ENCODE measurements at regions of chr15 and their contacts with region 1.

Region 1: DNA sequence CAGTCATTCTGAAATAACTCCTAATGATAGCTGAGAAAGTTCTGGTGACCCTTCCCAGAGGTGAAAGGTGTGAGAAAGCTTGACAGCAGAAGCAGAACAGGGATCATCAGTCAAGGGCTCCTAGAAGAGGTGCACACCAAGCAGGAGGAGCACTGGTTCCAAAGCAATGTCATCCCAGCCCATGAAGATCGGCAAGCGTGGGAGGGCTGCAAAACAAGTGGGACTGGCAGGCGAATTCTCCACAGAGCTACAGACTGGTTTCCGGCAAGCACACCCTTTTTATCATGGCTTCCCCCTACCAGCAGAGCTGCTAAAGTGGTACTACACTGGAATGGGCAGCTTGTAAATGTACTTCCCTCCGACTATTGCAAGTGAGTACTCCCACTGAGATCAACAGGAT is 62.3 kb upstream of the MYO5C start:
- DNase-seq: no peak
- CTCF ChIP-seq: no peak

Region 2: DNA sequence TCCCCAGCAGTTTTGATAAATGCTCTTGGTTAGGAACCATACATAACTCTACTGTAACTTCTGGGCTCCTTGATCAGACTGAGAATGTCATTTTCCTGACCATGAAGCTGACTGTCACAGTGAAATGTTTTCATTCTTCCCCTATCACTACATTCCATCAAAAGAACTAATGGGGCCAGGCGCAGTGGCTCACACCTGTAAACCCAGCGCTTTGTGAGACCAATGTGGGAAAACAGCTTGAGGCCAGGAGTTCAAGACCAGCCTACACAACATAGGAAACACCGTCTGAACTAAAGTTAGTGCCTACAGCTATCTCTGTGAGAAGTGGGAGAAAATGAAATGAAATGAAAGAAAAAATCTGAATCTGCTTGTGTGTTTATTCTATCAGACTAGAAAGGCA is 10.5 kb after region 1 on chr15:
- CTCF ChIA-PET with region 1: interaction called, 16 read pairs
- POLR2A ChIA-PET with region 1: no interaction called
- DNase-seq: no peak
- CTCF ChIP-seq: no peak